Activated naive CD4-positive, alpha-beta T cell treated with anti-CD3 and anti-CD28 coated beads for 36 hours (primary cell): ENCODE measurements at regions of chr11 and their contacts with region 1.

Region 1: GRCh38 chr11:35013514-35014233 is 97.3 kb downstream of the PDHX start:
- DNase-seq: peak; percentile 71
- H3K4me3 Mint-ChIP-seq: peak overlapping the region; percentile 39
- H3K27ac Mint-ChIP-seq: peak overlapping the region; percentile 93
- H3K4me1 Mint-ChIP-seq: peaks cover 41% of the 10 kb centered on the region
- H3K27me3 Mint-ChIP-seq: peaks cover 4% of the 10 kb centered on the region

Region 2: DNA sequence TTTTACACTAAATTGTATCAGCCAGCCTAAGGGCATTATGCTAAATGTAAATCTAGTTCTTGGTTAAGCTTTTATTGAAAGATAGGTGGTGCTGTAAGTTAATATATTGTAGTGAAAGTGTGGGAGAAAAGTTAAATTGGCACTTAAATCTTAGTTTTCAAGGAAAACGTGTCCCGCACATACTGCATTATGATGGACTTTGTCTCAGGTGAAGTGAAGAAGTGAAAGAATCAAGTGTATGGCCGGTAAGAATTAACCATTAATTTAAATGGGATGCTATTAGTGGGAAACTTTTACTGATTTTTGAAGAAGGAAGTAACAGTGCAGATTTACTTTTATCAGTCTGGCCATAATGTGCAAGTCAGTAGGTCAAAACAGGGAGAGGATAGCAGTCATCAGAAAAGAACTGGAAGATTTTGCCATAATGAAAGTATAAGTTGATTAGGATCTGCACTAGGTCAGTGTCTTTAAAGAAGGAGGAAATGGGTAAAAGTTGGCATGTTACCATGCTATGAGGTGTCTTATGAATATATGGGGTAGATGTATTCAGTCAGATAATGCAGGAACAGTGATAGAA is 15.6 kb before region 1 on chr11:
- CTCF ChIA-PET with region 1: interaction called, 6 read pairs
- intact Hi-C with region 1: loop called (anchors 1 kb)
- DNase-seq: no peak
- H3K4me3 Mint-ChIP-seq: no peak overlapping the region
- H3K27ac Mint-ChIP-seq: peak overlapping the region; percentile 9
- H3K4me1 Mint-ChIP-seq: peaks cover 30% of the 10 kb centered on the region
- H3K27me3 Mint-ChIP-seq: no peaks in the 10 kb centered on the region

Region 3: DNA sequence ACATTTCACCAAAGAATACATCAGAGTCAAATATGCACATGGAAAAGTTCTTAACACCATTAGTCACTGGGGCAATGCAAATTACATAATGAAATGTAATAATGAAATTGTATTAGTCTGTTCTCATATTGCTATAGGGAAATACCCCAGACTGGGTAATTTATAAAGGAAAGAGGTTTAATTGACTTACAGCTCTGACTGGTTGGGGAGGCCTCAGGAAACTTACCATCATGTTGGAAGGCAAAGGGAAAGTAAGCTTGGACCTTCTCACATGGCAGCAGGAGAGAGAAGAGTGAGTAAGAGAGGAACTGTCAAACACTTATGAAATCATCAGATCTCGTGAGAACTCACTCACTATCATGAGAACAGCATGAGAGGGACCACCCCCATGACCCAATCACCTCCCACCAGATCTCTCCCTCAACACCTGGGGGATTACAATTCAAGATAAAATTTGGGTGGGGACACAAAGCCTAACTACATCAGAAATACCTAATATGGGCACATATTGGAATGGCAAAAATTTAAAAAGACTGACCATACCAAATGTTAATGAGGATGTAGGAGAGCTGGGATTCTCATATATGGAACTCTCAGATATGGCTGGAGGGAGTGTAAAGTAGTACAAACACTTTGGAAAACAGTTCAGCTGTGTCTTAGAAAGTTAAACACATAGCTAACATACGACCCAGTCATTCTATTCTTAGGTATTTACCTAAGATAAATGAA is 60.2 kb after region 1 on chr11:
- CTCF ChIA-PET with region 1: no interaction called
- intact Hi-C with region 1: loop called (anchors 1 kb)
- DNase-seq: peak; percentile 68
- H3K4me3 Mint-ChIP-seq: peak overlapping the region; percentile 31
- H3K27ac Mint-ChIP-seq: peak overlapping the region; percentile 83
- H3K4me1 Mint-ChIP-seq: peaks cover 67% of the 10 kb centered on the region
- H3K27me3 Mint-ChIP-seq: no peaks in the 10 kb centered on the region

Region 4: GRCh38 chr11:35214792-35215193 is 201.1 kb after region 1 on chr11:
- CTCF ChIA-PET with region 1: no interaction called
- intact Hi-C with region 1: loop called (anchors 1 kb)
- DNase-seq: peak; percentile 77
- H3K4me3 Mint-ChIP-seq: no peak overlapping the region
- H3K27ac Mint-ChIP-seq: peak overlapping the region; percentile 78
- H3K4me1 Mint-ChIP-seq: peaks cover 62% of the 10 kb centered on the region
- H3K27me3 Mint-ChIP-seq: no peaks in the 10 kb centered on the region

Region 5: DNA sequence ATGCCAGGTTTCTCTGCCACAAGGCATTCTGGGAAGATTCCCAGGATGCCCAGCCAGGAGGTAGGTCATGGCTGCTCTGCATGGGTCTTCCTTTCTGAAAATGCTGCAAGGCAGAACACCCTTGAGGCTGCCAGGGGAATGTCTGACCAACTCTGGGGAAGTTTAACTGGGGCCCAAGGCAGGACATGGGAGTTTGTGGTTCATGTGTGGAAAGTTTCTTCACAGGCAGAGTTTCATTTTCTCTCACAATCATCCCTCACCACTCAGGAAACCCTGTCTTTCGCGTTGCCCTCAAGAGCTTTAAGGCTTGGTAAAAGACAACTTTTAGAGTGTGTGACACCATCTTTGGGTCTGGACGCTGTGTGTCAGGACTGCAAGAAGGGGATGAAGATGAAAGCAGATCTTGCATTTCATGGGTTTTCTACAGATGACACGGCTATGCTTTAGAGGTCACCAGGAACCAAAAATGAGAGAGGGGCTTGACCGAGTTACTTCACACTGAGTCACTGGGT is 258.8 kb after region 1 on chr11:
- CTCF ChIA-PET with region 1: no interaction called
- intact Hi-C with region 1: loop called (anchors 1 kb)
- DNase-seq: peak; percentile 70
- H3K4me3 Mint-ChIP-seq: peak overlapping the region; percentile 17
- H3K27ac Mint-ChIP-seq: peak overlapping the region; percentile 63
- H3K4me1 Mint-ChIP-seq: peaks cover 48% of the 10 kb centered on the region
- H3K27me3 Mint-ChIP-seq: no peaks in the 10 kb centered on the region